SK-N-SH (cell line): ENCODE measurements at regions of chr16 and their contacts with region 1.

Region 1: DNA sequence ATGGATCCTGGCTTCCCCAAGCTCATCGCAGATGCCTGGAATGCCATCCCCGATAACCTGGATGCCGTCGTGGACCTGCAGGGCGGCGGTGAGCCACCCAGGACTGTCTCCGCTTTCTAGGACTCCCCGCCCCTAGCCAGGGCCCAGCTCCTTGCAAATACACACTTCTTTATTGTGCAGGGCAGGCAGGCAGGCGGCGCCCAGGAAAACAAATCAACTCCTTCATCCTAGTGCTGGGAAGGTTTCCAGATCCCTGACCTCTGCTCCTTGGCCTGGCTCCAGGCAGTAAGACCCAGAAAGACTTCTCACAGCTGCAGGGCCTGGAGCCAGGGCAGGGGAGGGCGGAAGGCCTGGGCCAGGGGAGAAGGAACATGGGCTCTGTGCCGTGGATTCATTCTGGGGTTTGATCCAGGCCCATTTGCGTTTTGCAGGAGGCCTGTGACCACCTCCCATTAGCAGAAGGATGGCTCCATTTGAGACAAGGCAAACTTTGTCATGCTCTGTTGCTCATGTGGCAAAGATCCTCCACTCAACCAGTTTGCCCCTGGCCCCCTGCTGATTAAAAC is 6.0 kb upstream of the LPCAT2 start:
- DNase-seq: peak; percentile 78
- H3K4me3 ChIP-seq: no peak overlapping the region
- H3K27ac ChIP-seq: peak overlapping the region; percentile 85 to 94
- H3K4me1 ChIP-seq: peaks cover 48 to 59% of the 10 kb centered on the region in 2 experiments
- H3K27me3 ChIP-seq: no peaks in the 10 kb centered on the region
- CTCF ChIP-seq: peak; percentile 7; the same call in 1 of the 2 replicates
- EP300 ChIP-seq: peak; percentile 85 to 89
- RAD21 ChIP-seq: peak; percentile 20; the same call in 1 of the 2 replicates

Region 2: DNA sequence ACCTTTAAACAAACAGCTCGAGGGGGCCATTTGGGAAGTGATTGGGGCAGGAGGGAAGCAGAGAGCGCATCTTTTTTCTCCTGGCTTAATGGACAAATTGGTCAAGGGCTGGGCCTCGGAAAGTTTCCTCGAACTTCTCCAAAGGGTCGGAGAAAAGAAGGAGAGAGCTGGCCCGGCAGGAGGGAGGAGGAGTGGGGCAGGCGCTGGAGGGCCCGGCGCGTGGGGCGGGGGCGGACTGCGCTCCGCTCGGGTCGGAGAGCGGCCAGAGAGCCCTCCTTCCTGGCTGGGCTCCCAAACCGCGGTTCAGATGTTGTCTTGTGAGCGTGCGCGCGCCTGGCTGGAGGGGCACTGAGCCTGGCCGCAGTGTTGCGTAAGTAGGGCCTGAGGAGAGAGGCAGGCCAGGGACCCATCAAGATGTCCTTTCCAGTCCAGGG is 22.6 kb before region 1 on chr16:
- CTCF ChIA-PET with region 1: interaction called, 10 read pairs
- POLR2A ChIA-PET with region 1: interaction called, 8 read pairs
- DNase-seq: peak; percentile 84
- H3K4me3 ChIP-seq: peak overlapping the region; percentile 88 to 96
- H3K27ac ChIP-seq: peak overlapping the region; percentile 74 to 98
- H3K4me1 ChIP-seq: peaks cover 10 to 35% of the 10 kb centered on the region in 2 experiments
- H3K27me3 ChIP-seq: no peaks in the 10 kb centered on the region
- CTCF ChIP-seq: no peak
- EP300 ChIP-seq: peak in 1 of 2 experiments; percentile 45; a peak in 1 of 4 replicates
- RAD21 ChIP-seq: no peak

Region 3: GRCh38 chr16:55543472-55543871 is 40.6 kb after region 1 on chr16:
- CTCF ChIA-PET with region 1: interaction called, 10 read pairs
- POLR2A ChIA-PET with region 1: no interaction called
- DNase-seq: peak; percentile 16
- H3K4me3 ChIP-seq: no peak overlapping the region
- H3K27ac ChIP-seq: peak overlapping the region; percentile 55 to 65; a peak in 2 of 4 replicates
- H3K4me1 ChIP-seq: peaks cover 9 to 15% of the 10 kb centered on the region in 2 experiments; a peak in 3 of 4 replicates
- H3K27me3 ChIP-seq: no peaks in the 10 kb centered on the region
- CTCF ChIP-seq: peak; percentile 65
- EP300 ChIP-seq: no peak
- RAD21 ChIP-seq: peak; percentile 74

Region 4: GRCh38 chr16:55655860-55656695 is 153.2 kb after region 1 on chr16 and contains the start of gene SLC6A2:
- CTCF ChIA-PET with region 1: interaction called, 15 read pairs
- POLR2A ChIA-PET with region 1: interaction called, 18 read pairs
- DNase-seq: peak; percentile 95
- H3K4me3 ChIP-seq: peak within 1 kb of the TSS in 1 of 2 experiments; percentile 59; a peak in 2 of 4 replicates
- H3K27ac ChIP-seq: peak within 1 kb of the TSS; percentile 22 to 100; a peak in 2 of 4 replicates
- H3K4me1 ChIP-seq: peaks cover 0 to 58% of the 10 kb centered on the region in 2 experiments; a peak in 2 of 4 replicates
- H3K27me3 ChIP-seq: peaks cover 12% of the 10 kb centered on the region
- CTCF ChIP-seq: no peak
- EP300 ChIP-seq: peak in 1 of 2 experiments; percentile 90; a peak in 2 of 4 replicates
- RAD21 ChIP-seq: no peak
- polyA plus RNA-seq, gene SLC6A2: 3.3 and 12.7 TPM in 2 replicates

Region 5: GRCh38 chr16:55661941-55662643 is 159.2 kb after region 1 on chr16:
- CTCF ChIA-PET with region 1: interaction called, 15 read pairs
- POLR2A ChIA-PET with region 1: interaction called, 18 read pairs
- DNase-seq: peak; percentile 76
- H3K4me3 ChIP-seq: peak overlapping the region in 1 of 2 experiments; percentile 59; a peak in 1 of 4 replicates
- H3K27ac ChIP-seq: peak overlapping the region in 1 of 2 experiments; percentile 100; a peak in 2 of 4 replicates
- H3K4me1 ChIP-seq: peaks cover 0 to 75% of the 10 kb centered on the region in 2 experiments; a peak in 2 of 4 replicates
- H3K27me3 ChIP-seq: peaks cover 6% of the 10 kb centered on the region; the same call in 1 of the 2 replicates
- CTCF ChIP-seq: no peak
- EP300 ChIP-seq: peak in 1 of 2 experiments; percentile 89; a peak in 2 of 4 replicates
- RAD21 ChIP-seq: peak; percentile 37